SK-N-SH (cell line): ENCODE measurements at regions of chr1 and their contacts with region 1.

Region 1: DNA sequence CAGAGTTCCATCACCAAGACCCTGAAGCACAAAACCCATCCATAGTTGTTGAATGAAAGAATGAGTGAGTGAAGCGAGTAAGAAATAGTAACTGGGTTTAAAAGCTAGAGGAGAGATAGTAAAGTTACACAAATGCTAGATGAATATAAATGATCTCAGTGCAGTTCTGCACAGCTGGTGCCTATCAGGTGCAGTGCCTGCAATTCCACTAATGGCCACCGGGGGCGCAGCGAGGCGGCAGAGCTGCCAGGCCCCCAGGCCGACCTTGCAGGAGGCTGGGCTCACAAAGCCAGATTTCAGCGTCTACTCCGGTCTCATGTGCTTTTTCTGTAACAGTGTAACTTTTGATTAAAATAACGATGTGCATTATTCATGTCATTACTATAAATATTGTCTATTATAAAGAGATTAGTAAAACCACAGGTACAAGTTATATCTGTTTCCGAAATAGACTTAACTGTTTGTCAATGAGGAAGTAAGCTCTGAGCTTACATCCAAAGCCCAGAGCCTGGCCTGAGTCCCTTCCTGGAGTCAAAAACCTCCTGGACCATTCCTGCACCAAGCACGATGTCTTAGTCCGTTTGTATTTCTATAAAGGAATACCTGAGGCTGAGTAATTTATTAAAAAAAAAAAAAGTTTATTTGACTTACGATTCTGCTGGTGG is 477.6 kb downstream of the NPHP4 start:
- DNase-seq: peak; percentile 89
- H3K4me3 ChIP-seq: no peak overlapping the region; a peak in 1 of 4 replicates
- H3K27ac ChIP-seq: no peak overlapping the region
- H3K4me1 ChIP-seq: peaks cover 0 to 19% of the 10 kb centered on the region in 2 experiments; a peak in 1 of 4 replicates
- H3K27me3 ChIP-seq: no peaks in the 10 kb centered on the region
- CTCF ChIP-seq: peak; percentile 83
- EP300 ChIP-seq: no peak
- RAD21 ChIP-seq: peak; percentile 69

Region 2: GRCh38 chr1:5493851-5494311 is 20.8 kb before region 1 on chr1:
- CTCF ChIA-PET with region 1: interaction called, 32 read pairs
- POLR2A ChIA-PET with region 1: no interaction called
- DNase-seq: no peak
- H3K4me3 ChIP-seq: no peak overlapping the region
- H3K27ac ChIP-seq: peak overlapping the region in 1 of 2 experiments; percentile 62; a peak in 1 of 4 replicates
- H3K4me1 ChIP-seq: peaks cover 0 to 52% of the 10 kb centered on the region in 2 experiments; a peak in 1 of 4 replicates
- H3K27me3 ChIP-seq: no peaks in the 10 kb centered on the region
- CTCF ChIP-seq: no peak
- EP300 ChIP-seq: no peak
- RAD21 ChIP-seq: no peak

Region 3: DNA sequence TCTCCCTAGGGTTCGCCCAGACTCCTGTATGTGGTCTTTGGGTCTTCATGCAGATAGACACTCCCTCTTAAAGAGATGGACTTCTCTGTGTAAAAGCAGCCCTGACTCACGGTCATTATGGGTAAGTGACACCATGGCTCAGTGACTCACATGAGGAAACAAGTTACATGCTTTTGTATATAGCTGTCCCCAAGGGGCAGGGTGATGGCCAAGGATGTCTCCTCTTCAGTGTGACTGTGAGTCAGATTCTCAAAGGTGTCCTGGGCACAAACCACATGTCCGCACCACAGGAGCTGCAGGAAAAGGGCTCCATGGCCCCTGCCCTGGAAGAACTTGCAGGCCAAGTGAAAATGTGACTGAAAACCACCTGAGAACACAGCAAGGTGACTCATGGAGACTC is 97.2 kb after region 1 on chr1:
- CTCF ChIA-PET with region 1: interaction called, 10 read pairs
- POLR2A ChIA-PET with region 1: no interaction called
- DNase-seq: no peak
- H3K4me3 ChIP-seq: no peak overlapping the region
- H3K27ac ChIP-seq: no peak overlapping the region
- H3K4me1 ChIP-seq: no peaks in the 10 kb centered on the region
- H3K27me3 ChIP-seq: no peaks in the 10 kb centered on the region
- CTCF ChIP-seq: no peak
- EP300 ChIP-seq: no peak
- RAD21 ChIP-seq: no peak

Region 4: DNA sequence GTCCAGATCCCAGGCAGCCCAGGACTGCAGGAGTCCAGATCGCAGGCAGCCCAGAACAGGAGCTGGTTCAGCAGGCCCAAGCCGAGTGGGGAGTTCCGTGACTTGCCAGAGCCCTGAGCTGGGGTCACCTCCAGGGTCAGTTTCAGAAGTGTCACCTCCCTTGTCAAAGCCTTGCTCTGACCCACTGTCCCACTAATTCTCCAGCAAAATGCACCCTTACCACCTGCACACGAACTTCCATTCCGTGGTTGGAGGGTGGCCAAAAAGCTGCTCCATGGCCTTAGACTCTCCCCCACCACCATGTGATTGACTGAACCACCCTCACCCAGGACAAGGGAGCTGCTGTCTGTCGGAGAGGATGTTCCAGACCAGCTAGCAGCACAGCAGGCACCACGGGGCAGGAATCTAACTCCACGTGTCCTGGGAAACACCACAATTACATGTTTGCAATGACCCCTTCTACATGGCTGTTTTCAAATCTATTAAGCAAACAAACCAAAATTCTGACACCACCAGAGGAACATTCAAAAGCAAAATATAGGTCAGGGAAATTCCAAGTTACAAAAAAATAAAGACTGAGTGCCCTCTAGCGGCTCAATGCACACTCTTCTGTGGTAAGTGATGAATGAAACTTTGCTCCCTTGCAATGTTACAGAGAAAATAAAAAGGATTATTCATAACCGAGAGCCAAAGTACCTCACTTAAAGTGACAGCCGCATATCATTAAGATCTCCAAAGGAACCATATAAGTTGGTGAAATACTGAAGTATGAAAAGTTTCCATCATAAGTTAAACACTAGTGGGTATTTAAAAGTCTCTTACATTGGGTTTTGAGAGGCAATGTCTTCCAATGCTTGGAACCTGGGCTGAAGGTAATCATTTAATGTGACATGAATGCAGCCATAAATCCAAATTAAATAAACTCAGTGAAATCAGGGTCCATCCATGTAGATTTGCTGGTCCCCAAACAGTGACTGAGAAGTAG is 401.2 kb after region 1 on chr1:
- CTCF ChIA-PET with region 1: interaction called, 13 read pairs
- POLR2A ChIA-PET with region 1: no interaction called
- DNase-seq: peak; percentile 66
- H3K4me3 ChIP-seq: no peak overlapping the region; a peak in 1 of 4 replicates
- H3K27ac ChIP-seq: no peak overlapping the region
- H3K4me1 ChIP-seq: peaks cover 0 to 12% of the 10 kb centered on the region in 2 experiments; a peak in 1 of 4 replicates
- H3K27me3 ChIP-seq: no peaks in the 10 kb centered on the region
- CTCF ChIP-seq: peak; percentile 72
- EP300 ChIP-seq: no peak
- RAD21 ChIP-seq: peak; percentile 84